IMR-90 (cell line): ENCODE measurements at regions of chr17 and their contacts with region 1.

Region 1: DNA sequence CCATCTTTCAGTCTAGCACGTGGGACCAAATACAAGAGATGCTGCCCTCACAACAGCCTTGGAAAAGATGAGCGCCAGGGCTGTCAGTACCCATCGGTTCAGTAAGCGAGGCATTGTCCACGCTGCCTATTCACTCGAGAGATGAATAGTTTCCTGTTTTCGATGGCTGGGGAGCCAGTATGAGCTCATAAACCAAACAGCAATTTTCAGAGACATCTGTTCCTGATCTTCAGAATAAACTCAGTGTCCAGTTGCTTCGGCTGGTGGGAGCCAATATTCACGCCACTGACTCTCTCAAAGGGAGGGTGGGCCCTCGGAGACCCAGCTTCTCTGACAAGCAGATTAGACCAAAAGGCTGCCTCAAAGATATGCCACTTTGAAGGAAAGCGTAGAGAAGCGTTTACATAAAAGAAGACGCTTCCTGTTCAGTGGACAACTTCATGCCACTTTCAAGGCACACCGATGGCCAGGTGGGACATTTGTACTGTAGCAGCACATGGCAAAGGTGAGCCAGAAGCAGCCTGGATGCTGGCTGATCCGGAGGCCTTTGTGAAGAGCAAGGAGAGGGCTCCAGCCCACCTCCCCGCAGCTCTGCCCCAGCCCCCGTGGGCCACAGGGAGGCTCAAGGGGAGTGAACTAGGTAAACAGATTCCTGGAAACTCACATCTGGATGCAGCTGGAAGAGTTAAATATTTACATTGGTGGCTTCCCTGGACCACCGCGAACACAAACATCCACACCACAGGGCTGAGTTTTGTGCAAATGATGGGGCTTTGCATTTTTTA is 6.0 kb downstream of the TIMM22 start:
- DNase-seq: peak; percentile 89
- ATAC-seq: peak; percentile 43
- H3K4me3 ChIP-seq: no peak overlapping the region
- H3K27ac ChIP-seq: peak overlapping the region; percentile 95
- H3K4me1 ChIP-seq: peaks cover 48% of the 10 kb centered on the region
- H3K27me3 ChIP-seq: no peaks in the 10 kb centered on the region
- CTCF ChIP-seq: no peak
- POLR2A ChIP-seq: no peak
- RAD21 ChIP-seq: no peak

Region 2: GRCh38 chr17:896953-897661 is 105.9 kb before region 1 on chr17:
- CTCF ChIA-PET with region 1: no interaction called
- POLR2A ChIA-PET with region 1: no interaction called
- dilution Hi-C with region 1: no loop called
- in situ Hi-C with region 1: no loop called
- intact Hi-C with region 1: no loop called
- DNase-seq: peak; percentile 75
- ATAC-seq: peak; percentile 24
- H3K4me3 ChIP-seq: no peak overlapping the region
- H3K27ac ChIP-seq: peak overlapping the region; percentile 72
- H3K4me1 ChIP-seq: peaks cover 24% of the 10 kb centered on the region
- H3K27me3 ChIP-seq: no peaks in the 10 kb centered on the region
- CTCF ChIP-seq: no peak
- POLR2A ChIP-seq: no peak
- RAD21 ChIP-seq: no peak

Region 3: GRCh38 chr17:979538-980405 is 23.2 kb before region 1 on chr17 and contains the start of gene NXN:
- CTCF ChIA-PET with region 1: no interaction called
- POLR2A ChIA-PET with region 1: no interaction called
- dilution Hi-C with region 1: no loop called
- in situ Hi-C with region 1: no loop called
- intact Hi-C with region 1: no loop called
- DNase-seq: peak; percentile 65
- ATAC-seq: peak; percentile 86
- H3K4me3 ChIP-seq: peak within 1 kb of the TSS; percentile 100
- H3K27ac ChIP-seq: peak within 1 kb of the TSS; percentile 91
- H3K4me1 ChIP-seq: peaks cover 12% of the 10 kb centered on the region
- H3K27me3 ChIP-seq: no peaks in the 10 kb centered on the region
- CTCF ChIP-seq: peak; percentile 37
- POLR2A ChIP-seq: no peak
- RAD21 ChIP-seq: peak; percentile 46
- total RNA-seq, gene NXN: 52.5 and 52.8 TPM in 2 replicates

Region 4: DNA sequence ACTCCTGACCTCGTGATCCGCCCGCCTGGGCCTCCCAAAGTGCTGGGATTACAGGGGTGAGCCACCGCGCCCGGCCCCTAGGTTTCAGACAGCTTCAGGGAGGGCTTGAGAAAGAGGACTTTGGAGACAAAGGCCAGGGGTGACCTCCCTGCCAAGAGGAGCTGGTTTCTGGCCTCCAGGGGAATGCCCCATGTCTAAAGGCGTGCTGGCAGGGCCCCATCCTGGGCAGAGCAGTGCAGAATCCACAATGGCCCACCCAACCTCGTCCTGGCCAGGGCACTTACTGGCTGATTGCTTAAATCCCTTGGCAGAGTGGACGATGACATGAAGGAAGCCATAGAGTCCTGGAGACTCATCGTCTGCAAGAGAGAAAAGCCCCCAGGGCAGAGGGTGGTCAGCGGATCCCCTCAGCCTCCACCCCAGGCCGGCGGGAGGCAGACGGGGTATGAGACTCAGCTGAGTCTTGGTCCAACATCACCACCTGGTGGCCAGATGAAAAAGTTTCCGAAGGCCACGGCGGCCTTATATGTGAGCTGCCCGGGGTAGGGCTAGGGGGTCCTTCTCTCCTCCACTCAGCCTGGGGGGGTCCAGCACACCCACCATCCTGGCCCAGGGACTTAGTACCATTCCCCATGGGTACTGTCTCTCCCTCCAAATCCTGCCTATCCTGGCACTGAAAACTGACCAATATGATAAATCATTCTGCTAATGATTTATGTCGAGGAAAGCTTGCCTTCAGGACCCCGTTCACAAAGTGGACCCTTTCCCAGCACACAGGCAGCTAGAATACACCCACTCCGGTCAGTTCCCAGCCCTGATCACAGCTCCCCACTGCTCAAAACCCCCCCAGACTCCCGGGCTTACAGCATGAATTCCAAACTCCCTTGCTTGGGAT is 53.0 kb after region 1 on chr17:
- CTCF ChIA-PET with region 1: interaction called, 25 read pairs
- POLR2A ChIA-PET with region 1: no interaction called
- dilution Hi-C with region 1: no loop called
- in situ Hi-C with region 1: no loop called
- intact Hi-C with region 1: loop called (anchors 1 kb)
- DNase-seq: peak; percentile 59
- ATAC-seq: peak; percentile 84
- H3K4me3 ChIP-seq: no peak overlapping the region
- H3K27ac ChIP-seq: no peak overlapping the region
- H3K4me1 ChIP-seq: no peaks in the 10 kb centered on the region
- H3K27me3 ChIP-seq: no peaks in the 10 kb centered on the region
- CTCF ChIP-seq: peak; percentile 68
- POLR2A ChIP-seq: no peak
- RAD21 ChIP-seq: peak; percentile 73